HEK293 (cell line): ENCODE measurements at regions of chr19 and their contacts with region 1.

Region 1: DNA sequence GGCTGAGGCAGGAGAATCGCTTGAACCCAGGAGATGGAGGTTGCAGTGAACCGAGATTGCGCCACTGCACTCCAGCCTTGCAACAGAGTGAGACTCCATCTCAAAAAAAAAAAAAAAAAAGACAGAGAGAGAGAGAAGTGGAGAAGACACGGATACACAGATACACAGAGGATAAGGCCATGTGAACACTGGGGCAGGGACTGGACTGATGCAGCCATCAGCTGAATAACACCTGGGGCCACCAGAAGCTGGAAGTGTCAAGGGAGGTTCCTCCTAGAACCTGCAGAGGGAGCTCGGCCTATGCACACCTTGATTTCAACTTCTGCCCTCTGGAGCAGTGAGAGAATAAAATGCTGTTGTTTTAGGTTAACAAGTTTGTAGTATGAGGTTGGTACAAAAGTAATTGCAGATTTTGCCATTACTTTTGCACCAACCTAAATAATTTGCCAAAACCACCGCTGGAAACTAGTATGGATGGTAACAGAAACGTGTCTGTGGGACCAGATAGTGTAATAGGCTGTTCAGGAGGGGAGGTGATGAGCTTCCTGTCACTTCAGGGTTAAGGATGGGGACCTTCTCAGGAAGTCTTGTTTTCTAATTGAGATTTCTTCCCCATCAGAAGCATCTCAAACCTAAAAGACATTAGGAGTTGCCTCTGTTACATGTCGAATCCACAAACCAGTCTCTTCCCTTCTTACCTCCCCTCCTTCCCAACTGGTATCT is 36.4 kb upstream of the IGSF23 start:
- H3K4me3 ChIP-seq: no peak overlapping the region
- H3K27ac ChIP-seq: no peak overlapping the region
- H3K4me1 ChIP-seq: no peaks in the 10 kb centered on the region
- CTCF ChIP-seq: peak; percentile 50

Region 2: GRCh38 chr19:44587963-44588770 is 11.2 kb after region 1 on chr19:
- CTCF ChIA-PET with region 1: interaction called, 31 read pairs
- POLR2A ChIA-PET with region 1: interaction called, 3 read pairs
- H3K4me3 ChIP-seq: no peak overlapping the region
- H3K27ac ChIP-seq: no peak overlapping the region
- H3K4me1 ChIP-seq: no peaks in the 10 kb centered on the region
- CTCF ChIP-seq: no peak

Region 3: DNA sequence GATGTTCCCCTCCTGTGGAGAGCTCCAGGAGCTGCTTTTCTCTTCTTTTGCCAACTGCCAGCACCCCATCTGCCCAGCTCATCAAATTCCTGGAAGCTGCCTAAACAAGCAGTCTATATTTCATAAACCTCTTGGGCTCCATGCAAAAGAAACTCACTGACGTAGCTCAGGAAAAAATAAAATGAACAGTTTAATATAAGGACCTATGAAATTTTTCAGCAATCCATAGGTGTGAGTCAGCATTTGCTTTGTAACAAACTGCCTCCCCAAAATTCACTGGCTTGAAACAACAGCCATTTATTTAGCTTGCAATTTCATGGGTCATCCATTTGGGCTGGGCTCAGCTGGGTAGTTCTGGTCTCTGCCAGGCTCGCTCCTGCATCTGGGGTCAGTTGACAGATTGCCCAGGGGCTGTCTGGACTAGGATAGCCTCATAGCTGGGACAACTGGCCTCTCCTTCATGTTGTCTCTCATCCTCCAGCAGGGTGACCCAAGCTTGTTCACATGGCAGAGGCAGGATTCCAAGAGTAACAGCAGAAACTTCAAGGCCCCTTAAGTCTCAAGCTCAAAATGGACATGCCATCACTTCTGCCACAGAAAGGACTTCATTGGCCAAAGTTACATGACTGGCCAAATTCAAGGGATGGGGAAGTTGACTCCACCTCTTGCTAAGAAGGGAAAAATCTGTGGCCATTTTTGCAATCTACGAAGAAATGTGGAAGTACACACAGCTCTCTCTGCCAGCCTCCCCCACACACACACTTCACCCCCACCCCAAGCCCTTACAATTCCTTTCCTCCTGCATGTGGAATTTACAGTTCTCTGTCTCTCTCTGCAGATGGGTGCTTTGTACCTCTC is 58.8 kb after region 1 on chr19:
- CTCF ChIA-PET with region 1: interaction called, 10 read pairs
- POLR2A ChIA-PET with region 1: no interaction called
- H3K4me3 ChIP-seq: no peak overlapping the region
- H3K27ac ChIP-seq: no peak overlapping the region
- H3K4me1 ChIP-seq: no peaks in the 10 kb centered on the region
- CTCF ChIP-seq: no peak

Region 4: DNA sequence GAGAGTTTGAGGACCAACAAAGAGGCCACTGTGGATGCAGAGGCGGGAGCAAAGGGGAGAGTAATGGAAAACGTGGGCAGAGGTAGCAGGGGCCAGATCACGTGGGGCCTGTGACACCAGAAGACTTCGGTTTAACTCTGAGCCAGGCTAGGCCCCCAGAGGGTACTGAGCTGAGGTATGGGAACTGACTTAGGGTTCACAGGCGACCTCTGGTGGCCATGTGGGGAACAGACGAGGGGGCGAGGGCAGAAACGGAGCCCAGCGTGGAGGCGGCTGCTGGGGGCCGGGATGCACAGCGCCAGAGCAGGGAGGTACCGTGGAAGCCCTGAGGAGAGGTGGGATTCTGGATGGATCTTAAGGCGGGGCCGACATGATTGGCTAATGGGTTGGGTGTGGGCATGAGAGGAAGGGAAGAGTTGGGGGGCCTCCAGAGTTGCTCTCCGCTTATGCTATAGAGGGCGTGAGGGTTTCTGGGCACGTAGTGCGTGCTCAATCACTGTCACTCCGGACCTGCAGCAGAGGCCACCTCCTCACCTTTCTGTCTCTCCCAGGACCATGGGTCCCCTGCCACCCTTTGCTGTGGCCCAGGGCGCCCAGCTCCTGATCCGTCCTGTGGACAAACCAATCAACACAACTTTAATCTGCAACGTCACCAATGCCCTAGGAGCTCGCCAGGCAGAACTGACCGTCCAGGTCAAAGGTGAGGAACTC is 80.4 kb after region 1 on chr19:
- CTCF ChIA-PET with region 1: interaction called, 52 read pairs
- POLR2A ChIA-PET with region 1: interaction called, 4 read pairs
- H3K4me3 ChIP-seq: no peak overlapping the region
- H3K27ac ChIP-seq: no peak overlapping the region
- H3K4me1 ChIP-seq: no peaks in the 10 kb centered on the region
- CTCF ChIP-seq: peak; percentile 92

Region 5: DNA sequence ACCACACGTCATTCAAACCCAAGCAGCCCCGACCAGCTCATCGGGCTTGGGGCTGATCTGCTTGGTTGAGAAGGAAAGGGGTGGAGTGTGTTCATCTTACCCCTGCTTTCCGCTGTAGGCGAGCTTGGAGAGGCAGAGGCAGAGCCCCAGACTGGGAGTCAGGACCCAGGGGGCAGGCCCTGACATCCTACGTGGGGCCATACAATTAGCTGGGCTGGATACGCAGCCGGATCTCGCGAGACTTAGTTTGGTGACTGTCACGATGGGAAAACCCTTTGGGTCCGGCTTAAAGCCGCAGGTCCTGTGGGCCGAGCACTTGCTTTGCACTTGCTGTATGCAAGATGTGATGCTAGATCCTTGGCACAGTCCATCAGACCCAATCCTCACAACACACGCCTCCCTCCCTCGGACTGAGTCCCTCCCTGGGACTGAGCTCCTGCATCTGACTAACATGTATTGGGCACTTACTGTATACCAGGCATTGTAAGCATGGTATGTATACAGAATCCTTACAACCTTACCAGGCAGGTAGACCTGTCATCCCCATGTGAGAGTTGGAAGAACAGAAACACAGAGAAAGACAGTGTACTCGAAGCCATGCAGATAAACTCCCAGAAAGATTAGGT is 125.7 kb after region 1 on chr19:
- CTCF ChIA-PET with region 1: no interaction called
- POLR2A ChIA-PET with region 1: no interaction called
- H3K4me3 ChIP-seq: no peak overlapping the region
- H3K27ac ChIP-seq: no peak overlapping the region
- H3K4me1 ChIP-seq: no peaks in the 10 kb centered on the region
- CTCF ChIP-seq: no peak